Head of caudate nucleus (tissue), 42 donors: ENCODE measurements at regions of chr1 and their contacts with region 1.

Region 1: DNA sequence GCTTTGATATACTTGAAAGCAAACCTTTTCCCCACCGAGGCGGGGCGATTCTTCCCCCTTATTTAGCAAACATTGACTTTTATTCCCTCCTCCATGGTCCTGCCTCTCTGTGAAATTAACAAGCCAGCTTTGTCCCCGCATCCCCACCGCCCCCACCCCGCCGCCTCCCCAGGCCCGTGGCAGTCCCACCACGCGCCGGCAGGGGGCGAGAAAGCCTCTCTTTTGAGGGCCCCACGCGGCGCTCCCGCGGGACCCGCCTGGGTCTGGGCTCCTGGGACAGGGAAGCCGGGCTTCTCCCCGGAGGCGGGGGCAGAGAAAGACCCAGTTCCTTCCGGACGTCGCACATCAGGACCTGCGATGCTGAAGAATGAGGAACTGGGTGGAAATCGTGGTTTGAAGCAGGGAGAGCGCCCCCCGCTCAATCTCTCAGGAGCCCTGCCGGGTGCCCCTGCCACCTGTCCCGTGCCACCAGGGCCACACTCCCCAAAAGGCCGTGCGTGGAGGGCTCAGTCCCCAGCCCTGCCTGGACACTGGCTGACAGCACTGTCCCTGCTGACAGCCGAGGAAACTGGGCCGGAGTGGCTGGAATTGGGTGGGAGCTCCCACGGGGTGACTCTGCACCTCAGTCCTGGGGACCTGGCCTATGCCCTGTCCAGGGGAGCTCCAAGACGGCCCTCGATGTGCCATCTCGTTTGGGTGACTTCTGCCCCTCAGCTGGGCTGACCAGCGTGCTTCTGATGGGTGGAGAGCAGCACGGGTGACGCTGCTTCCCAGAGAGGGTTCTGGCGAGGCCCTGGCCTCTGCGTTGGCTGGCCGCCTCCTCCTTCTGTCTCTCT is 8.6 kb upstream of the ACTRT2 start:
- DNase-seq: peak; percentile 66 to 95 (median 86)

Region 2: DNA sequence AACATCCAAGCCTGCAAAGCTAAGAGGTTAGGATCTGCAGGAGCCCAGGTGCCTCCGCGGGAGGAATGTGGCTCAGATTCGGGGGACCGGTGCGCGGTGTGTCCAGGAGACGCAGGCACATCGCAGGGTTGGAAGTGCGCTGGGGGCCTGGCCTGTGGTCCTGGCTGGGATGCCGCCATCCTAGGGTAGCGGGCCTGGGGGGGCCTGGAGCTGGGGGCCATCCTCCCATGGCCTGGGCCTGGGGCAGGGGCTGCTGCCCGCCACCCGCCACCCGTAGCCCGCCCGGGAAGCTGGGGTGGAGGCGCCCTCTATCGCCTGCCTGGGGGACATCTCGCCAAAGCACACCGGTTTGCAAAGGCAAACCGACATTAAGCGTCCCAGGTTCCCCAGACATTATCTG is 271.2 kb after region 1 on chr1:
- intact Hi-C with region 1: loop called (anchors 10 kb)
- DNase-seq: peak in 39 of 42 donors; percentile 19 to 87 (median 69)

Region 3: DNA sequence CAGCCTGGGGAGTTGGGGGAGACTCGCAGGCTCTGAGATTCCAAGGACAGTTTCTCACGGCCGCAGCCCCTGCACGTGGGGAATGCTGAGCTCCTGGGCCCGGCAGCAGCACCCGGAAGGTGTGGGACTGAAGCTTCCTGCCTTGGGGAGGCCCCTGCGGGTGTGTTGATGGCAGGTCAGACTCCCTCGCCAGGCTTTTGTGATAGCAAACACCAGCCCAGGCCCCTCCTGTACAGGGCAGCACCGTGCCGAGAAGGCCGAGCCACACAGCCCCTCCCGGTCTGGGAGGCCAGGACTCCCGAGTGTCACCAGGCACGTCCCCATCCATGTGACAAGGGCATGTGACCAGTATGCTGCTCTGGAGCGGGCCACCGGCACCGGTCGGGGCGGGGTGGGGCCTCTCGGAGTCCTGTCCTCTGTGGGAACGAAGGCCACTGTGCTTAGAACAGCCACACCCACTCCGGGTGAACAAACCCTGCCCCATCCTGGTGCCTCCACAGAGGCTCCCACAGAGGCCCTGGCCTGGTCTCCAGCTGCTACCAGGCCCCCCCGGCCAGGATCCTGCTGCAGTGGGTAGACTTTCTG is 410.7 kb after region 1 on chr1:
- intact Hi-C with region 1: loop called (anchors 5 kb)
- DNase-seq: peak in 39 of 42 donors; percentile 24 to 83 (median 64)